Right ventricle myocardium inferior (tissue), 1 donor: ENCODE measurements at regions of chr12 and their contacts with region 1.

Region 1: DNA sequence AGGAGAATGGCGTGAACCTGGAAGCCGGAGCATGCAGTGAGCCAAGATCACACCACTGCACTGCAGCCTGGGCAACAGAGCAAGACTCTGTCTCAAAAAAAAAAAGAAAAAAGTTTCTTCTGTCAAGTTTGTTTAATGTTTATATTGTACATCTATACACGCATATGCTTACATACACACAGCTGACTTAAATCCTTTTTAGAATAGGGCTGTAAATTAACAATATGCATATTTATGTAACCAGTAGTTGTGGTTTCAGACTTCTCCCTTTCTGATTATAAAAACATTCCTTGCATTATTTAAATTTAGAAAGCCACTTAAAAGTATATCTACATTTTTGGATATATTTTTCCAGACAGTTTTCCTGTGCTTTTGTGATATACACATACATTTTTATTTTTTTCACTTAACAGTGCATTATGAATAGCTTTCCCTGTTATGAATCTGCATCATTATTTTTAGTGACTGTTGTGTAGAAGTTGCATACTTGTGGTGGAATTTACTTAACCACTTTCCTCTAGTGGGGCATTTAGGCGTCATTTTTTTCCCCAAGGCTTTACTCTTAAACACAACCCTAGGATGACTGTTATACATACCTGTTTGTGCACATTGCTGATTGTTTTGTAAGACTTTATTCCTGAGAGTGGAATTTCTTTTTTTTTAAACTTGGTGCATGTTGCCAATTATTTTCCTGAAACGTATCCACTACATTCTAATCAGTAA is 29.4 kb downstream of the POLR3B start:
- DNase-seq: no peak
- ATAC-seq: no peak

Region 2: DNA sequence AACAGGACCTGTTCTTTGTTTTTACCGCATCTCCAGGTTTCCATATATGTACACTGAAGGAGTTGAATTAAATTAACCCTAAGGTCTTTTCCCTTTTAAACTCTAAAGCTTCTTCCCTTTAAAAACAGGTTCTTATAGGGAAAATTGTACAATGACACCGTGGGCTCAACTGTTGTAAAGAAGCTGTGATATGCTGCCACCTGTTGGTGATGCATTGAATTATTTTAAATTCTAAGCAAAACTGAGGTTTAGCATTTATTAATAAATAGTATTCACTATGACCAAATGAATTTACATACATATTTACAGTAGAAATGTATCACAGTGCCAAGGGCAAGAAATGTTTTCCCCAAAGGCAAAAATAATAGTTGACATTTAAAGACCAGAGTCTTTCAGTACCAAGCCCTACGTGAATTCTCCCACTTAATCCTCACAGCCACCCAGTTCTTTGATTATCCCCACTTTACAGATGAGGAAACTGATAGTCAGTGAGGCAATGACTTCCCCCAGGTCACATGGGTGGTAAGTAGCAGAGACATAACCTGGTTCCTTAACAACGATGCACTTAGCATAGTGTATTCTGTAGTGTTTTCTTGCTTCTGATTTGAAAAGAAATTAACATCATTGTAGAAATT is 533.1 kb after region 1 on chr12:
- intact Hi-C with region 1: loop called (anchors 1 kb)
- DNase-seq: no peak
- ATAC-seq: no peak

Region 3: DNA sequence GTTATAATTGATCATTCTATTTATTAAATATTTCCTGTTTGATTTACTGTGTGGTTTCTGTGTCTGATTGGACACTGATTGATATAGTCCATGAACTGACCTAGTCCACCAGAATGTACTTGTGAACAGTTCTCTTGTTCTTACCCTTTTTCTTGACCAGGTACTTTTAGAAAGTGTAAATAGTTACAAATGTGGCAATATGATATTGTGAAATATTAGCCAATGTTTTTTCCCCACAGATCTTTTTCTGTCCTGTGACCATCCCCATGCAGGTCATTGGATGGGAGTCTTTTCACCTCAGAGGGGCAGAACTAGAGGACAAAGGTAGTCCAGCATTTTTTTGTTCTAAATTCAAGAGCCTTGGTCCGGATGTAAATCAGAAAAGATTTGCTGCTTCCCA is 714.7 kb after region 1 on chr12:
- intact Hi-C with region 1: loop called (anchors 5 kb)
- DNase-seq: no peak
- ATAC-seq: no peak